ENCODE measurements at regions of chr12 and their contacts with region 1.

Region 1: DNA sequence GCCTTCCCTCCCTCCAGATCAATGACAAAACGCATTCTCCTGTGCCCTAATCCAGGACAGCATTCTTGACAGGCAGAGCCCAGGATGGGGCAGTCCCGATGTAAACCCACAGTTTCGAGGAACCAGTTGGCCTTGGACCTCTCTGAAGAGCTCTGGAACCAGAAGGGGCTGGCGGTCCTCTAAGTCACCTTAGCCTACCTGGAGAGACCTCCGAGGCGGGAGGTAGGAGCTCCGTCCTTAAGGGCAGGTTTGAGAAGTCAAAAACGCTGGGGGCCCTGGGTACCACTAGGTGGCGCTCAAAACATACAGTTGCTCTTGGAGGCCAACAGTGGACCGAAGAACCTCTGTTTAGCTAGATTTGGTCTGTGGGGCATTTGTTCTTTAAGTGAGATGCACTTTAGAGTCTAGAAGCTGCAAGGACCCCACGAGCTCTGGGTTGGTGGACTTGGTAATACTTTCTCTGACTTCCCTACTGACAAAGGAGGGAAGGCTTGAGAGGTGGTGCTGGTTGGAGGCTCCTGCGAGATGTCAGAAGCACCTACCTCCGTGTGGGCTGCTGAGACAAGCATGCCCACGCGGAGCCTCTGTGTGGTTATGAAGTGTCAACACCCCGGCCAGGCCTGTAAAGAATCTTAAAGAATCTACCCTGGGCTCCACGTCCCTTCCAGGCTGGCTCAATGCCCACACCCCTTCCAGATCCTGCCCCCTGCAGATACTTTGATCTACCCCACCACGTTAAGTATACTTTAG is 74.8 kb upstream of the CHST11 start:
- DNase-seq: peak; percentile 84
- H3K4me3 Mint-ChIP-seq: no peak overlapping the region
- H3K27ac Mint-ChIP-seq: no peak overlapping the region
- H3K4me1 Mint-ChIP-seq: peaks cover 14% of the 10 kb centered on the region
- H3K27me3 Mint-ChIP-seq: peaks cover 6% of the 10 kb centered on the region

Region 2: DNA sequence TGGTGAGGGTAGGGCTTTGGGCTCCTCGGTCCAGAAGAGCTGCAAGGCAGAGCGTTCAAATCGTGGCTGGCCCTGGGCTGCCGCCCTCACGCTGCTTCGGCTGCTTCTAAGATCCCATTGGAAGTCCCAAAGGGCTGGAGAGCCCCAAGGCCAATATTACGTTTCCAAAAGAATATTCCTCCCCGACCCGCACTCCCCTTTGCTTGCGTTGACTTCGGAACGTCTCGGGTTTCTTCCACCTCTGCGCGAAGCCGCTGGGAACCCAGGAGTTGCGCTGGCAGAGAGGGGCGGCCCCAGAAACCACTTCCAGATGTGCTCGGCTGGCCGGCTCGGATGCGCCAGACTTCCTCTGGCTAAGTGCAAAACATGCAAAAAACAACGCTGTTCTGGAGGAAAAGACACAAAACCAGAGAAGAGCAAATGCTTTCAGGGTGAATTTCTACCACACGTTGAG is 332.0 kb before region 1 on chr12 and contains the start of gene GLT8D2:
- CTCF ChIA-PET with region 1: no interaction called
- POLR2A ChIA-PET with region 1: no interaction called
- DNase-seq: no peak
- H3K4me3 Mint-ChIP-seq: no peak within 1 kb of the TSS
- H3K27ac Mint-ChIP-seq: no peak within 1 kb of the TSS
- H3K4me1 Mint-ChIP-seq: peaks cover 15% of the 10 kb centered on the region
- H3K27me3 Mint-ChIP-seq: peaks cover 48% of the 10 kb centered on the region
- total RNA-seq, gene GLT8D2: not detected

Region 3: DNA sequence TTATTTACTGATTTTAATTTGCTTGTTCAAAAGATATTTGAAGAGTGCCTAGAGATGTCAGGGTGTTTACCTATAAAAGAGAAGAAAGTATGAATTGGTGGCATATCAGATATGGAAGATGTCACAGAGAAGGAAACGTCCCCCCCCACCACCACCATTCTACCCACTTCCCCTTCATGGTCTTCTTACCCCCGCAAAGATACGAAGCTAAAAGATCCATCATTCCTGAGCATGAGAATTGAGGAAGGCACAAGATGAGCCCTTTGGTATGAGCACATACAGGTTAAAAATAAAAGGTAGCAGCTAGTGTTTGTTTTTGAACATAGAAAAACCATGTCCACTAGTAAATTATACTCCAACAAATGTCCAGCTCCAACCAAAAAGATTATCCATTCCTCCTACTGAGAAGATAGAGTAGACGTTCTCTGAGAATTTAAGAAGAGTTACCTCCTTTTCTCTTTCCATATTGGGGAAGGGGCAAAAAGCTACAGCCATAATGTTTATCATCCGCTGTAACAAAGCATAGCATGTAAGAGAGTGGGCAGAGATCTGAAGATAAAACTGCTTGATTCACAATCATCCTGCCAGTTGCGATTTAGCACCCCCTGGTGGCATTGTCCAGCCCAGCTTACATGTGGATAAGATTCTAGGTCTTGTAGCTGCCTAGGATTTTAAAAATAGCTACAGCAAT is 273.0 kb before region 1 on chr12:
- CTCF ChIA-PET with region 1: no interaction called
- POLR2A ChIA-PET with region 1: no interaction called
- DNase-seq: peak; percentile 88
- H3K4me3 Mint-ChIP-seq: no peak overlapping the region
- H3K27ac Mint-ChIP-seq: no peak overlapping the region
- H3K4me1 Mint-ChIP-seq: peaks cover 5% of the 10 kb centered on the region
- H3K27me3 Mint-ChIP-seq: no peaks in the 10 kb centered on the region

Region 4: DNA sequence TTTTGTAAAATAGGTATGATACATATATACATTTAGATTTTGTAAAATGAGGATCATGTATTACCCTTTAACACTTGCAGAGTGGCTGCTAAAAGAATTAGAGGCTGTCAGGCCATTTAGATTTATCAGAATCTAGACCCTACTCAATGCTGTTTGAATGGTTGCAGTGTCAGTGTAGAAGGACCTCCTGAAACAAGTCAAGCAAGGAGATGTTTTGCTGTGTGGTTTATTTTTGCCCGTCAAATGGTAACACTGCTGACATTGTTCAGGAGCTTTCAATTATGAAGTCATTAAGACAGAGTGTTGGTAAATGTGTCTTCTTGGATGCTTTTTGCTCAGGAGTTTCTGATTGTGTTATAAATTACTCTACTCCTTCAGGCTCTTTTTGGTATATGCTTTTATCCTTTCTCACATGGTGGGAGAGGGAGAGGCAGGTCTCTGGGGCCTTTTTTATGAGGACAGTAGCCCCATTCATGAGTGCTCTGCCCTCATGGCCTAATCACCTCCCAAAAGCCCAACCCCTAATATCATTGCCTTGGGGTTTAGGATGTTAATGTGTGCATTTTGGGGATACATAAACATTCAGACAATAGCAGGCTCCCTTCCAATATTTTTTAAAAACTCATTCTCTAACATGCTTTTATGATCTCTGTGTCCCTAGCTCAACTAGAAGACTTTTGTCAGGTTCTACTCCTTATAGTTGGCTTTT is 61.8 kb before region 1 on chr12:
- CTCF ChIA-PET with region 1: no interaction called
- POLR2A ChIA-PET with region 1: no interaction called
- DNase-seq: no peak
- H3K4me3 Mint-ChIP-seq: no peak overlapping the region
- H3K27ac Mint-ChIP-seq: no peak overlapping the region
- H3K4me1 Mint-ChIP-seq: peaks cover 5% of the 10 kb centered on the region
- H3K27me3 Mint-ChIP-seq: no peaks in the 10 kb centered on the region

Region 5: GRCh38 chr12:104604070-104604994 is 222.4 kb after region 1 on chr12:
- CTCF ChIA-PET with region 1: interaction called, 11 read pairs
- POLR2A ChIA-PET with region 1: no interaction called
- DNase-seq: peak; percentile 71
- H3K4me3 Mint-ChIP-seq: peak overlapping the region; percentile 34
- H3K27ac Mint-ChIP-seq: peak overlapping the region; percentile 95
- H3K4me1 Mint-ChIP-seq: peaks cover 69% of the 10 kb centered on the region
- H3K27me3 Mint-ChIP-seq: no peaks in the 10 kb centered on the region

Region 6: GRCh38 chr12:104827587-104827986 is 445.7 kb after region 1 on chr12:
- CTCF ChIA-PET with region 1: interaction called, 16 read pairs
- POLR2A ChIA-PET with region 1: no interaction called
- DNase-seq: no peak
- H3K4me3 Mint-ChIP-seq: no peak overlapping the region
- H3K27ac Mint-ChIP-seq: no peak overlapping the region
- H3K4me1 Mint-ChIP-seq: no peaks in the 10 kb centered on the region
- H3K27me3 Mint-ChIP-seq: no peaks in the 10 kb centered on the region

Region 7: DNA sequence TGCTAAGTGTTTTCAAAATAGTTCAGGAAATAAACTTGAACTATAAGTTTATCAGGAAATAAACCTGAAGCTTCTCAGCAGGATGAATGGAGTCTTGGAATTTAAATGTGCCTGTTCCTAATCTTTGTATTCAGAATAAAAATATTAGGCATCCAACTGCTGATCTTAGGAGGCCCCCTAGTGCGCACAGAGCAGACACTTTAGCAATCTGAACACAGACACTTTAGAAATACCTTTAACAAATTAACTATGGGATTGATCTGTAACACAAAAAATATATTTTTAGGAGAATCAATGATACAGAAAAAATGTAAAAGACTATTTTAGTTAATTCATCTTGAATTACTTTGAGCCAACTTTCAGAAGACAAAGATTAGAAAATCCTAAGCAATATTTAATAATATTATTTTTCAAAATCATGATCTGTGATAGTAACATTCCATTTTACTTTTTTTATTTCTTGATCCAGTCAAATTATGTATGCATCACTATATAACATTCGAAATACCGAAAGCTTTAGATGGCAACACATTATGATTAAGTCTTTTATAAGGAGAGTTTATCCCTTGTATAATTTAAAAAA is 495.3 kb after region 1 on chr12:
- CTCF ChIA-PET with region 1: interaction called, 13 read pairs
- POLR2A ChIA-PET with region 1: no interaction called
- DNase-seq: peak; percentile 36
- H3K4me3 Mint-ChIP-seq: no peak overlapping the region
- H3K27ac Mint-ChIP-seq: no peak overlapping the region
- H3K4me1 Mint-ChIP-seq: peaks cover 3% of the 10 kb centered on the region
- H3K27me3 Mint-ChIP-seq: peaks cover 8% of the 10 kb centered on the region

Region 8: DNA sequence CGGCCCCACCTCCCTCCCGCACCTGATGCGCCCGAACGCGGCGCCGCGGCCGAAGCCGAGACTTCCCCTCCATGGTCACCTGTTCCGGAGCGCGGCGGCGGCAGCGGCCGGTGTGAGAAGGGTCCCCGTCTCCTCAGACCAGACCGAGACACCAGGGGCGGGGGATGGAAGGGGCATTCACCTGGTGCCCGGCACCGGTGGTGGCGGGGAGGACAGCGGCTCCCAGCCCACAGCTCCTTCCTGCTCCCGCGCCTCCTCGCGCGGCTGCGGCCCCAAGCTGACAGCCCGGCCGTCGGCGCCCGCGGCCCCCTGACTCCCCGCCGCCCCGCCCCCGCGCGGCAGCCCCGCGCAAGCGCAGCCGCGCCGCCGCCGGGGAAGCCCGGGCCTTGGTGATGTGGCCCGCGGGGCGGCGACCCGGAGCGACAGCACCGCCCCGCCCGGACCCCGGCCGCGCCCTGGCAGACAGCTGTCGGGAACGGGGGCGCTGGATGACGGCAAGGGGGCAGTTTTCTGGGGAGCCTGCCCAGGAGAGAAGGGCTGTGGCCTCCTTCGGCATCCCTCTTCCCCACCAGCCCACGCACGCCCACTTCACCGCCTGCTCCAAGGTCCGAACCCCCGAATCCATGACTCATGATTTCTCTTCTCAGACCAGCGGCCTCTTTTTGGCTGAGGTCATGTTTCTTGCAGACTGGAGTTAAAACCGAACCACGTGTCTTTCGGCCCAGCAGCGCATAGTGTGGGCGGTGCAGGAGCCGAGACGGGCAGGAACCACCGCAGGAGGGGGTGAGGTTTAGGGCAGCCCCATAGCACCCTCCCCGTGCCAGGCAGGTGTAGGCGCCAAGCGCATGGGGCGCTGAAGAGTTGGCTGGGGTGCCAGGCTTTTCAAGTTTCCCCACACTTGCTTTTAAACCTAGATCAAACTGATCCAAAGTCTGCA is 576.4 kb after region 1 on chr12 and contains the start of gene SLC41A2:
- CTCF ChIA-PET with region 1: interaction called, 21 read pairs
- POLR2A ChIA-PET with region 1: no interaction called
- DNase-seq: peak; percentile 80
- H3K4me3 Mint-ChIP-seq: peak within 1 kb of the TSS; percentile 90
- H3K27ac Mint-ChIP-seq: peak within 1 kb of the TSS; percentile 69
- H3K4me1 Mint-ChIP-seq: peaks cover 25% of the 10 kb centered on the region
- H3K27me3 Mint-ChIP-seq: peaks cover 40% of the 10 kb centered on the region
- total RNA-seq, gene SLC41A2: 8.0 to 8.1 TPM

Region 9: GRCh38 chr12:105053116-105053572 is 671.2 kb after region 1 on chr12:
- CTCF ChIA-PET with region 1: interaction called, 49 read pairs
- POLR2A ChIA-PET with region 1: interaction called, 6 read pairs
- DNase-seq: peak; percentile 84
- H3K4me3 Mint-ChIP-seq: no peak overlapping the region
- H3K27ac Mint-ChIP-seq: no peak overlapping the region
- H3K4me1 Mint-ChIP-seq: peaks cover 5% of the 10 kb centered on the region
- H3K27me3 Mint-ChIP-seq: peaks cover 3% of the 10 kb centered on the region